ENCODE measurements at regions of chr10 and their contacts with region 1.

Region 1: DNA sequence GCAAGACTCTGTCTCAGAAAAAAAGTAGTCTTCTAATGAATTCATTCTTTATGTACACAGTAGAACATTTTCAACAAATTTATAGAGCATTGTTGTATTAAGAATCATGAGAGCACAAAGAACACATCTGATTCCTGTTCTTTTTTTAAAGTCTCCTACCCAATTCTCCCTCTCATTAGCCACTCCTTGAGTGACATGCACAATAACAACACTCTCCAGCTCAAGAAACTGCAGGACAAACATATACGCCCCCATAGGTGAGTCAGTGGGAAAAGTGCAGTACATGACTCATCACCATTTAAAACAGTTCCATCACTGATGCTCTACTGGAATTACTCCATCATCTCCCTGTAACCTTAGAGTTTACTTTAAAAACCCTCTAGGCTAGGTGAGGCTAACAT is 94.6 kb downstream of the HPSE2 start:
- DNase-seq: no peak
- ATAC-seq: no peak
- H3K4me3 ChIP-seq: no peak overlapping the region
- H3K4me3 Mint-ChIP-seq: no peak overlapping the region
- H3K27ac ChIP-seq: no peak overlapping the region
- H3K27ac Mint-ChIP-seq: no peak overlapping the region
- H3K4me1 ChIP-seq: no peaks in the 10 kb centered on the region
- H3K4me1 Mint-ChIP-seq: no peaks in the 10 kb centered on the region
- H3K27me3 ChIP-seq: no peaks in the 10 kb centered on the region
- H3K27me3 Mint-ChIP-seq: no peaks in the 10 kb centered on the region
- CTCF ChIP-seq: no peak

Region 2: GRCh38 chr10:99084161-99084560 is 56.9 kb before region 1 on chr10:
- CTCF ChIA-PET with region 1: no interaction called
- POLR2A ChIA-PET with region 1: no interaction called
- intact Hi-C with region 1: loop called in 1 of 2 experiments (anchors 10 kb)
- DNase-seq: no peak
- ATAC-seq: no peak
- H3K4me3 ChIP-seq: no peak overlapping the region
- H3K4me3 Mint-ChIP-seq: no peak overlapping the region
- H3K27ac ChIP-seq: no peak overlapping the region
- H3K27ac Mint-ChIP-seq: no peak overlapping the region
- H3K4me1 ChIP-seq: no peaks in the 10 kb centered on the region
- H3K4me1 Mint-ChIP-seq: no peaks in the 10 kb centered on the region
- H3K27me3 ChIP-seq: no peaks in the 10 kb centered on the region
- H3K27me3 Mint-ChIP-seq: no peaks in the 10 kb centered on the region
- CTCF ChIP-seq: no peak

Measured in CD4-positive, alpha-beta T cell (primary cell).